SK-N-SH (cell line): ENCODE measurements at regions of chr1 and their contacts with region 1.

Region 1: DNA sequence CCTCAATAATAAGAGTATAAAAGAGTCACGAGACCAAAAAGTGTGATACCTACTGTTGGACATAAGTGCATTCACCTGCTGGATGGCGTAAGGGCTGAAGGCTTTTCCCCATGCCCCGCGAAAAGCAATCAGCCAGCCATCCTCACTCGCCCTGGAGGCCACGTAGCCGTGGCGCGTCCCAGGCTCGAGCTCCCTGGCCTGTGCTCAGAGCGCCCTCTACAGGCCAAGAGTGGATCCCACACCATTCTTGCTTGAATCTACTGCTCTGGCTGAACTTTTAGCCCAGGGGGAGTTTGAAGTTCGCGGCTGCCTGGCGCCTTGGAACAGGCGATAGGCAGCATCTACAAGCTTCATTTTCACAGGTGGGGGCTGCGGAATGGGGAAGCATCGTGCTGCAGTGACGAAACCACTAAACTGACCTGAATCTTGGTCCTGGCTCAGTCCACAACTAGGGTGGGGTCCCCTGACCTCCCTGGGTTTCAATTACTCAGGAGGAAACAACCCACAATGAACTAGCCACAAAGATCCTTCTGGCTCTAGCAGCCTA is 70.3 kb upstream of the SERBP1 start:
- DNase-seq: peak; percentile 88
- H3K4me3 ChIP-seq: peak overlapping the region in 1 of 2 experiments; percentile 55; a peak in 1 of 4 replicates
- H3K27ac ChIP-seq: no peak overlapping the region
- H3K4me1 ChIP-seq: peaks cover 0 to 3% of the 10 kb centered on the region in 2 experiments; a peak in 1 of 4 replicates
- H3K27me3 ChIP-seq: no peaks in the 10 kb centered on the region; the same call in 1 of the 2 replicates
- CTCF ChIP-seq: peak; percentile 94
- EP300 ChIP-seq: no peak
- RAD21 ChIP-seq: peak; percentile 100

Region 2: DNA sequence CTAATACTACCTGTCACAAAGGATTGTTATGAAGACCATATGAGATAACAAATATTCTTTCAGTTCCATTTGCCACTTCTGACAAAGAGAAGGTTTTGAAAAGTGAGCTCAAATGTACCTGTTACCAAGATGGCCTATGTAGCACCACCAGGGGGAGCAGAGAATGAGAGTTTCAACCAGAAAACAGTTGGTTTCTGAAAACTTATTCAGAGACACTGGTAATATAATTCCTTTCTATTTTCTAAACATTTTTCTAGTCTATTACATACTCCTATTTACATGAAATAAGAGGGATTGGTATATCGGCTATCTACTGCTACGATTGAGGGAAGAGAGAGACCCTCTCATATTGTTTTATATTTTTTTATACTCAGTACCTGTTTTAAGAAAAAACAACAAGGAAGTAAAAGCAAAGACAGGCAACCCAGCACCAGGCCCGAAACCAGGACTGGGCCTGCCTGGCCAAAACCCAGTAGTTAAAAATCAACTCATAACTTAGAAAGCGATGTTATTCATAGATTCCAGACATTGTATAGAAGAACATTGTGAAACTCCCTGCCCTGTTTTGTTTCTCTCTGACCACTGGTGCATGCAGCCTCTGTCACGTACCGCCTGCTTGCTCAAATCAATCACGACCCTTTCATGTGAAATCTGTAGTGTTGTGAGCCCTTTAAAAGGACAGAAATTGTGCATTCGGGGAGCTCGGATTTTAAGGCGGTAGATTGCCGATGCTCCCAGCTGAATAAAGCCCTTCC is 285.9 kb before region 1 on chr1:
- CTCF ChIA-PET with region 1: interaction called, 85 read pairs
- POLR2A ChIA-PET with region 1: no interaction called
- DNase-seq: no peak
- H3K4me3 ChIP-seq: no peak overlapping the region; a peak in 1 of 4 replicates
- H3K27ac ChIP-seq: no peak overlapping the region
- H3K4me1 ChIP-seq: no peaks in the 10 kb centered on the region; a peak in 1 of 4 replicates
- H3K27me3 ChIP-seq: no peaks in the 10 kb centered on the region
- CTCF ChIP-seq: peak; percentile 70
- EP300 ChIP-seq: no peak
- RAD21 ChIP-seq: peak; percentile 37; the same call in 1 of the 2 replicates

Region 3: GRCh38 chr1:67241200-67241746 is 259.2 kb before region 1 on chr1:
- CTCF ChIA-PET with region 1: interaction called, 10 read pairs
- POLR2A ChIA-PET with region 1: no interaction called
- DNase-seq: no peak
- H3K4me3 ChIP-seq: no peak overlapping the region
- H3K27ac ChIP-seq: no peak overlapping the region
- H3K4me1 ChIP-seq: no peaks in the 10 kb centered on the region
- H3K27me3 ChIP-seq: no peaks in the 10 kb centered on the region
- CTCF ChIP-seq: no peak
- EP300 ChIP-seq: no peak
- RAD21 ChIP-seq: no peak

Region 4: DNA sequence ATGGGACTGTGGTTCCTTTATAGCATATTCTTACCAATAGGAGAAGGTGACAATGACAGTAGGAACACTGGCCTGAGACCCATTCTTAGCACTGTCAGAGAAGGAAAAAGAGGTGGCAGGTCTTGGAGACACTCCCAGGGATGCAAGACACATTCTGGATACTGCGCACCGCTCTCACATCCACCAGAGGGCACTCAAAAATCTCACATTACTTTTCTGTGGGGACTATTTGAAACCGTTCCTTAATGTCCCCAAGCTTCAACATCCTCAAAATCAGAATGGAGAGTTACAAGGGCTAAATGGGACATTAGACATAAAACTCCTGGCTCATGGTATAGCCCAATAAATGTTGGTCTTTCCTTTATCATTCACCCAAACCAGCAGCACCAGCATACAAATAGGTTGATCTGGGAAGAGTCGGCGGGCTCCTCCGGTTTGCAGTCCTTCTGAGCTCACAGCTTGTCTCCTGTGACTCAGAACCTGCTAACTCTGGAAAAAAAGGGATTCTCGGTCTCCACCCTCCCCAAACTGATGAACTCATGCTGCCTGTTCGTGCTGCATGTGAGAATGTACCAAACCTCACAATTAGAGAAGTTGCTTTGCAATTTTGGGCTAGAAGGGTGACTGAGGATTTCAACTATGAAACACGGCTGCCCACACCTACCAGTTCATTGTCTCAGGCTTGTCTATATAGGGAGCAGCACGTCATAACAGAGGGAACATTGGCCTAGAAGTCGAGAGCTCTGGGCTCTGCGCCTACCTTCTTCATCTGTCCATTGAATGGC is 152.6 kb before region 1 on chr1:
- CTCF ChIA-PET with region 1: interaction called, 125 read pairs
- POLR2A ChIA-PET with region 1: no interaction called
- DNase-seq: peak; percentile 62
- H3K4me3 ChIP-seq: no peak overlapping the region
- H3K27ac ChIP-seq: no peak overlapping the region
- H3K4me1 ChIP-seq: no peaks in the 10 kb centered on the region
- H3K27me3 ChIP-seq: no peaks in the 10 kb centered on the region
- CTCF ChIP-seq: peak; percentile 86
- EP300 ChIP-seq: no peak
- RAD21 ChIP-seq: peak; percentile 84

Region 5: GRCh38 chr1:67436511-67437055 is 63.9 kb before region 1 on chr1:
- CTCF ChIA-PET with region 1: interaction called, 14 read pairs
- POLR2A ChIA-PET with region 1: no interaction called
- DNase-seq: no peak
- H3K4me3 ChIP-seq: no peak overlapping the region
- H3K27ac ChIP-seq: no peak overlapping the region
- H3K4me1 ChIP-seq: peaks cover 6 to 21% of the 10 kb centered on the region in 2 experiments
- H3K27me3 ChIP-seq: no peaks in the 10 kb centered on the region
- CTCF ChIP-seq: no peak
- EP300 ChIP-seq: no peak
- RAD21 ChIP-seq: no peak

Region 6: GRCh38 chr1:67485046-67485811 is 15.3 kb before region 1 on chr1:
- CTCF ChIA-PET with region 1: interaction called, 18 read pairs
- POLR2A ChIA-PET with region 1: interaction called, 3 read pairs
- DNase-seq: no peak
- H3K4me3 ChIP-seq: no peak overlapping the region
- H3K27ac ChIP-seq: no peak overlapping the region
- H3K4me1 ChIP-seq: no peaks in the 10 kb centered on the region
- H3K27me3 ChIP-seq: no peaks in the 10 kb centered on the region
- CTCF ChIP-seq: no peak
- EP300 ChIP-seq: no peak
- RAD21 ChIP-seq: no peak